H1 (cell line): ENCODE measurements at regions of chr2 and their contacts with region 1.

Region 1: DNA sequence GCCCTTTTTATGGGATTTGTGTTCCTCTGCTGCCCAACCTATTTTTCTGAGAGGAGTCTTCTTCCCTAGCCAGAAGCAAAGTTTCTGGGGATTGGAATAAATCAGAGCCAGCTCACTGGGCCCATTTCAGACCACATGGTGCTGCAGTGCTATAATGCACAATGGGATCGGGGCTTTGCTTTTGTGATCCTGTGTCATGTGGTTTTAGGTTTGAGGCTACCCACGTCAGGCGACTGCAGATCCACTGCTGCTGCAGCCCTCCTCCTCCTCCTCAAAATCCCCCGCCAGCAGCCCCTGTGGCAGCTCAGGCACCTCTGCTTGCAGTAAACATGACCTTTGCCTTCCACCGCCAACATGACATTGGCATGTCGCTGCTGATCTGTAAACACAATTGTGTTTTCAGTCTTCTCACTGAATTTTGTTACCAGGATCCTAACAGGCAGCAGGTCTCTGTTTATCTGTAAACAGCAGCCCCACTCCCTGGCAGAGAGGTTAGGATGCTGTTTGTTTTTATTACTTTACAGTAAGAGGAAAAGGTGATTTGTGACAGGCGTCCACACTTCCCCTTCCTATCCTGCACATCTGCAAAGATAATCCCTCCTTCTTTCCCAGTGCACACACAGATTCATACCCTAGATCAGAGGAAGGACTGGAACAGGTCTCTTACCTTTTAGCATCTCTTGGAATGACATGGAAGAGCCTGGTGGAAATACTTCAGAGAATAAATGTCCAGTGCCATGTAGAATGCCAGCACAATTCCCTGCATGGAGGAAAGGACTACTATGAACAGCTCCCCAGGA is 130.8 kb downstream of the FOXI3 start:
- DNase-seq: no peak
- H3K4me3 ChIP-seq: no peak overlapping the region
- H3K27ac ChIP-seq: no peak overlapping the region
- H3K4me1 ChIP-seq: peaks cover 2 to 9% (median 4%) of the 10 kb centered on the region in 4 experiments; a peak in 4 of 7 replicates
- H3K27me3 ChIP-seq: no peaks in the 10 kb centered on the region
- CTCF ChIP-seq: no peak
- EP300 ChIP-seq: no peak
- POLR2A ChIP-seq: no peak
- RAD21 ChIP-seq: no peak

Region 2: DNA sequence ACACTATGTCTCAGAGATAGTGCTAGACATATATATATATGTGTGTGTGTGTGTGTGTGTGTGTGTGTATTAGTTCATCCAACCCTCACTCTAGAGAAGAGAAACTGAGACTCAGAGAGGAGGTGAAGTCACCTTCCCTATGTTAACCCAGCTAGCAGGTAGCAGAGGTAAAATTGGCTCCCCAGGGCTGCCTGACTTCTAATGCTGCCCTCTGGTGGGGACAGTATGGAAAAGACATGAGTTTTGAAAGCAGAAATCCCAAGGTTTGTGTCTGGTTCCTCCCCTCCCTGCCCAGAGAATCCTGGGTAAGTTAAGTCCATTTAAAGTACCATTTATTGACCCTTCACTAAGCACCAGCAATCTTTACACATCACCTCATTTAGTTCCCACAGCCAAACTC is 13.8 kb before region 1 on chr2:
- CTCF ChIA-PET with region 1: interaction called, 12 read pairs
- POLR2A ChIA-PET with region 1: no interaction called
- DNase-seq: peak in 1 of 2 experiments; percentile 13
- H3K4me3 ChIP-seq: no peak overlapping the region
- H3K27ac ChIP-seq: no peak overlapping the region
- H3K4me1 ChIP-seq: no peaks in the 10 kb centered on the region
- H3K27me3 ChIP-seq: no peaks in the 10 kb centered on the region
- CTCF ChIP-seq: peak; percentile 40 to 76 (median 76)
- EP300 ChIP-seq: no peak
- POLR2A ChIP-seq: no peak
- RAD21 ChIP-seq: peak; percentile 67 to 78